ENCODE measurements at regions of chr4 and their contacts with region 1.

Region 1: DNA sequence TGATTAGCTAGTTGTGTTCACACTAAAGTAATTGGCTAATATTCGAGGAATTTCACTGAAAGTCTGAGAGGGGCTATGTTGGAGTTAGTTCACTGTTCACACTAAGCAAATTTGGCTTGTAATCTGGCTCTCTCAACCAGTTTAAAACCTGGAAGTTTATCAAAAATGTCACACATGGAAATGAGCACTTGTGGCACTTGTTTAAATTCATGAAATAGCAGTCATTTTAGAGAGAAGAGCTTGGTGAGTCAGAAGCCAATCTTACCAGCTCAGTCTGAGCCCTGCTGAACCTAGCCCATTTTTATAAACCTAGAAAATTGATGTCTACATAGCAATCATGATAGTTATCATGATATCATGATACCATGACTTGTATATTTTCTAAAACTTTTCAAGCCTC is 90.7 kb upstream of the JADE1 start:
- DNase-seq: peak; percentile 75
- ATAC-seq: peak; percentile 87
- H3K4me3 ChIP-seq: no peak overlapping the region
- H3K27ac ChIP-seq: no peak overlapping the region
- H3K4me1 ChIP-seq: peaks cover 6% of the 10 kb centered on the region
- H3K27me3 ChIP-seq: no peaks in the 10 kb centered on the region
- CTCF ChIP-seq: no peak
- POLR2A ChIP-seq: no peak
- RAD21 ChIP-seq: no peak

Region 2: DNA sequence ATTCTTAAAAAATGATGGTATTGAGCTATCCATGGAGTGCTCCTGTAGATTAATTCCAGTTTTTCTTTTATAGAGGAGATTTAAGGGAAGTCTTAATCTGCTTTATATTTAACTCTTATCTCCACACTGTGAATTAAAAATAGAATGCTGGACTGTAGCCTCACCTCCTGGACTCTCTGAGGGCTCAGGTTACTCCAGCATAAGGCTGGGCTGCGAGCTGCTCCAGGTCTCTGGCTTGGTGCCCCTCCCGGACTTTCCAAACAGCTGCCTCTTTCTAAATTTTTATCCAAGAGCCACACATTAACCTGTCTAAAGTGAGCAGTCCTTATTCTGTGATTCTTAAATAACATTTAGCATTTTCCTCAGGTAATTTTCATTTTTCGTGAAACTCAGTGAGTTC is 128.0 kb before region 1 on chr4:
- CTCF ChIA-PET with region 1: no interaction called
- POLR2A ChIA-PET with region 1: no interaction called
- dilution Hi-C with region 1: no loop called
- in situ Hi-C with region 1: no loop called
- intact Hi-C with region 1: loop called (anchors 5 kb)
- DNase-seq: peak; percentile 37
- ATAC-seq: no peak
- H3K4me3 ChIP-seq: no peak overlapping the region
- H3K27ac ChIP-seq: no peak overlapping the region
- H3K4me1 ChIP-seq: no peaks in the 10 kb centered on the region
- H3K27me3 ChIP-seq: no peaks in the 10 kb centered on the region
- CTCF ChIP-seq: 0 out of 2 replicates have a peak, but pooled peaks have one; percentile 4
- POLR2A ChIP-seq: no peak
- RAD21 ChIP-seq: no peak

Region 3: GRCh38 chr4:128660361-128661215 is 58.2 kb before region 1 on chr4:
- CTCF ChIA-PET with region 1: no interaction called
- POLR2A ChIA-PET with region 1: no interaction called
- dilution Hi-C with region 1: no loop called
- in situ Hi-C with region 1: no loop called
- intact Hi-C with region 1: loop called (anchors 1 kb)
- DNase-seq: peak; percentile 74
- ATAC-seq: peak; percentile 73
- H3K4me3 ChIP-seq: no peak overlapping the region
- H3K27ac ChIP-seq: peak overlapping the region; percentile 79; the same call in 1 of the 2 replicates
- H3K4me1 ChIP-seq: peaks cover 6% of the 10 kb centered on the region; the same call in 1 of the 2 replicates
- H3K27me3 ChIP-seq: no peaks in the 10 kb centered on the region; the same call in 1 of the 2 replicates
- CTCF ChIP-seq: no peak
- POLR2A ChIP-seq: no peak
- RAD21 ChIP-seq: no peak

Measured in IMR-90 (cell line).